Right ventricle myocardium inferior (tissue), 1 donor: ENCODE measurements at regions of chr18 and their contacts with region 1.

Region 1: DNA sequence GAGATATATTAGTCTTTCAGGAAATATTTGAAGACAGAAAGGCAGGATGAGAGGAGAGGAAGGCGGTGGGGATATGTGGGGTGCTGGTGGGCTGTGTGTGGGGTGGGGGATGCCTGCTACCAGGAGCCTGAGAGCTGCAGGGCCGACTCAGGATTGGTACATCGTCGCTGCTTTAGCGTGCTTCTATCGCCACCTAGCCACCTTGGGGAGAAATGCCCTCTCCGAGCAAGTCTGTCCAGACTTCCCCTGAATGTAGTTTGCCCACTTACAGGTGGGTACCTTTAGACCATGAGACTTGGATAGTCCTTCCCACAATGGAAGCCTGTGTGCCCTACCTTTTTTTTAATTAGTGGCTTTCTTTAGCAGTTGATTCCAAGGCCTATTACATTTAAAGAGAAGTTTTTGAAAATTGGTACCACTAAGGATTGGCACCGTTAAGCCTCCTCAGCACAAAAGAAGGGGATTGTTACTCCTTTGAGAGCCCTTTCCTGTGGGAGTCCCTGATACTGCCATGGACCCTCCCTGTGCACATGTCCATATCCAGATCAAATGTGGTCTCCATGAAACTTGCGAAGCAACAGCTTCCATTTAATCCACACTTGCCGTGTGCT is 114.1 kb upstream of the NDUFV2 start:
- DNase-seq: peak; percentile 61
- ATAC-seq: peak; percentile 53

Region 2: DNA sequence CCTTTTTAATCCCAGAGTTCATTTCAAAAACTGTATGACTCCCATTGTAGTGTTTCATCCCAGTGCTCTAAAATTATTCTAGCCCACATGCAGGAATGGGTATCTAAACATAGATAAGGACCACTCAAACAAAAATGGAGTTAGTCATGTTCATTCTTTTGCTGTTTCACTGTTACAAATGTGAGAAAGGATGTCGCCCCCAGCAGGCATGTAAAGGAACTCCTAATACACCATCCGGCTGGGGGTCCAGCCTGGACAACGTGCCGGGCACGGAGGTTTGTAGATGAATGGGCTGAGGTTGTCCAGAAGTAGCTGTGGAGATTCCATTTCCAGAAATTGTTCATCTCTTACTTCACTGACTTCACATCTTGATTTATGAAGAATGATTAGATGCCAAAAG is 481.0 kb before region 1 on chr18:
- intact Hi-C with region 1: no loop called
- DNase-seq: peak; percentile 48
- ATAC-seq: no peak

Region 3: DNA sequence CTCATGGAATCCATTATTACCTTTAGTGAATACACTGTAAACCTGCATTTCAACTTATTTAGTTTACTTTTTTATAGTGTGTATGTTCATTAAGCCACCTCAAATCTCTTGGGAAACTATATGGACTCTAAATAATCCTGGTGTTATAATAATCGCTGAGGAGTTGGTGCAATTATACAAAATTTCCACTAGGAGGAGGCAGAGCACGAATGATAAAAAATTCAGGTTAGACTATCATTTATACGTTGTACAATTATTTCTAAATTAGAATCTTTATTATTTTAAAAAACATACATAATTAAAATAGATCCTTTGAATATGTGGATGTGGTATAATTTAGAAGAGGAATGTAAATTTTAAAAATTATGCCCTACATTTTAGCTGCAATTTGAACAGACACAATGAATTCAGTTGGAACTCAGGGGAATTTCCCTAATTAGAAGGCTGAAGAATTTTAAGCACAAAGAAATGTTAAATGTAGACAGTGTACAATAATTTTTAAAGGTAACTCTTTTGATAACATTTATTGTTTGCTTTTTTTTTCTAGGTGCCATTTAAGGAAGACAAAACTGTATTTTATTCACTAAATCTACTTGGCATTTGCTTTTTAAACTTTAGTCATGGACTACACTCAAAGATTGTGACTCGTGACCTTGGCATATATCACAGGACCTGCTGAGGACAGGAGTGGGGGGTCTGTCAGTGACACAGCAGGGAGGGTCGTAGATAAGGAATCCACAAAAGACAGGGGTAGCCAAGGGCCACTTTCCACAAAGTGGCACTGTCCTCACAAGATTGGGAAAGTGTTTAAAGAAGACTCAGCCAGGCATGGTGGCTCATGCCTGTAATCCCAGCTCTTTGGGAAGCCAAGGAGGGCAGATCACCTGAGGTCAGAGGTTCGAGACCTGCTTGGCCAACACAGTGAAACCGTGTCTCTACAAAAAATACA is 333.6 kb before region 1 on chr18:
- intact Hi-C with region 1: loop called (anchors 1 kb)
- DNase-seq: no peak
- ATAC-seq: no peak

Region 4: GRCh38 chr18:8696749-8697211 is 291.6 kb before region 1 on chr18:
- intact Hi-C with region 1: loop called (anchors 1 kb)
- DNase-seq: peak; percentile 87
- ATAC-seq: peak; percentile 91

Region 5: GRCh38 chr18:9055185-9055584 is 66.8 kb after region 1 on chr18:
- intact Hi-C with region 1: no loop called
- DNase-seq: no peak
- ATAC-seq: no peak